CD8-positive, alpha-beta T cell (primary cell): ENCODE measurements at regions of chr3 and their contacts with region 1.

Region 1: GRCh38 chr3:14124615-14125190 is at the starts of genes CHCHD4 and TMEM43:
- DNase-seq: peak; percentile 95 to 100 (median 98)
- ATAC-seq: peak; percentile 87
- H3K4me3 ChIP-seq: peak within 1 kb of the TSS; percentile 95 to 100
- H3K4me3 Mint-ChIP-seq: peak within 1 kb of the TSS; percentile 96
- H3K27ac ChIP-seq: peak within 1 kb of the TSS; percentile 89 to 92
- H3K27ac Mint-ChIP-seq: peak within 1 kb of the TSS; percentile 93
- H3K4me1 ChIP-seq: peaks cover 30% of the 10 kb centered on the region
- H3K4me1 Mint-ChIP-seq: peaks cover 56% of the 10 kb centered on the region
- H3K27me3 ChIP-seq: no peaks in the 10 kb centered on the region
- H3K27me3 Mint-ChIP-seq: no peaks in the 10 kb centered on the region
- CTCF ChIP-seq: no peak
- total RNA-seq, gene CHCHD4: 0.71 to 1.7 TPM
- total RNA-seq, gene TMEM43: 20.1 to 24.3 TPM

Region 2: GRCh38 chr3:12830785-12831156 is 1293.9 kb before region 1 on chr3:
- CTCF ChIA-PET with region 1: no interaction called
- POLR2A ChIA-PET with region 1: no interaction called
- intact Hi-C with region 1: loop called in 1 of 2 experiments (anchors 10 kb)
- DNase-seq: no peak
- ATAC-seq: no peak
- H3K4me3 ChIP-seq: no peak overlapping the region
- H3K4me3 Mint-ChIP-seq: no peak overlapping the region
- H3K27ac ChIP-seq: no peak overlapping the region
- H3K27ac Mint-ChIP-seq: peak overlapping the region; percentile 72
- H3K4me1 ChIP-seq: no peaks in the 10 kb centered on the region
- H3K4me1 Mint-ChIP-seq: no peaks in the 10 kb centered on the region
- H3K27me3 ChIP-seq: no peaks in the 10 kb centered on the region
- H3K27me3 Mint-ChIP-seq: no peaks in the 10 kb centered on the region
- CTCF ChIP-seq: no peak

Region 3: GRCh38 chr3:13866041-13866965 is 258.4 kb before region 1 on chr3:
- CTCF ChIA-PET with region 1: no interaction called
- POLR2A ChIA-PET with region 1: no interaction called
- intact Hi-C with region 1: no loop called
- DNase-seq: peak; percentile 24 to 82 (median 57)
- ATAC-seq: peak; percentile 85
- H3K4me3 ChIP-seq: peak overlapping the region; percentile 7 to 11
- H3K4me3 Mint-ChIP-seq: peak overlapping the region; percentile 68
- H3K27ac ChIP-seq: peak overlapping the region; percentile 66 to 74
- H3K27ac Mint-ChIP-seq: peak overlapping the region; percentile 93
- H3K4me1 ChIP-seq: peaks cover 46% of the 10 kb centered on the region
- H3K4me1 Mint-ChIP-seq: peaks cover 60% of the 10 kb centered on the region
- H3K27me3 ChIP-seq: no peaks in the 10 kb centered on the region
- H3K27me3 Mint-ChIP-seq: no peaks in the 10 kb centered on the region
- CTCF ChIP-seq: no peak

Region 4: GRCh38 chr3:14144423-14145075 is 19.8 kb after region 1 on chr3:
- CTCF ChIA-PET with region 1: no interaction called
- POLR2A ChIA-PET with region 1: interaction called, 42 read pairs
- intact Hi-C with region 1: loop called (anchors 1 kb)
- DNase-seq: peak; percentile 52 to 98 (median 71)
- ATAC-seq: peak; percentile 69
- H3K4me3 ChIP-seq: peak overlapping the region; percentile 15 to 20
- H3K4me3 Mint-ChIP-seq: peak overlapping the region; percentile 66
- H3K27ac ChIP-seq: peak overlapping the region; percentile 95 to 96
- H3K27ac Mint-ChIP-seq: peak overlapping the region; percentile 98
- H3K4me1 ChIP-seq: peaks cover 55% of the 10 kb centered on the region
- H3K4me1 Mint-ChIP-seq: peaks cover 48% of the 10 kb centered on the region
- H3K27me3 ChIP-seq: no peaks in the 10 kb centered on the region
- H3K27me3 Mint-ChIP-seq: no peaks in the 10 kb centered on the region
- CTCF ChIP-seq: no peak

Region 5: GRCh38 chr3:14329116-14329830 is 204.6 kb after region 1 on chr3:
- CTCF ChIA-PET with region 1: no interaction called
- POLR2A ChIA-PET with region 1: no interaction called
- intact Hi-C with region 1: no loop called
- DNase-seq: no peak
- ATAC-seq: no peak
- H3K4me3 ChIP-seq: no peak overlapping the region
- H3K4me3 Mint-ChIP-seq: no peak overlapping the region
- H3K27ac ChIP-seq: no peak overlapping the region
- H3K27ac Mint-ChIP-seq: no peak overlapping the region
- H3K4me1 ChIP-seq: no peaks in the 10 kb centered on the region
- H3K4me1 Mint-ChIP-seq: no peaks in the 10 kb centered on the region
- H3K27me3 ChIP-seq: peaks cover 0 to 3% of the 10 kb centered on the region in 2 experiments
- H3K27me3 Mint-ChIP-seq: peaks cover 6% of the 10 kb centered on the region
- CTCF ChIP-seq: no peak

Region 6: DNA sequence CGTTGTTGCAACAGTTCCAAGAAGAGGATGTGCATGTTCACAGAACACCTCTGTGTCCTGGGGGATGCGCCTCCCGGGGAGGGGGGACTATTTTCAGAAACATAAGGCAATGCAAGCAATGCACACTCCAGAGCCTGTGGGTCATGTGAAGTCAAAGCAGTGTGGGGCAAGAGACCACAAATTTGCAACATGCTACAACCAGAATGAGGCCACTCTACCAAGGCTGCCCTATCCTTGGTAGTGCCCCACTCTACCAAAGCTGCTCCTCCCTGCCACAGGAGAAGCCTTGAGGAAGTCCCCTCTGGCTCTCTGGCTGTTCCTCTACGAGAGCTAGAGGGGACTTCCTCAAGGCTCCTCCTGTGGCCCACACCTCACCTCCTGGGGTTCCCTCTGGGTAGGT is 814.3 kb after region 1 on chr3:
- CTCF ChIA-PET with region 1: no interaction called
- POLR2A ChIA-PET with region 1: no interaction called
- intact Hi-C with region 1: no loop called
- DNase-seq: no peak
- ATAC-seq: no peak
- H3K4me3 ChIP-seq: no peak overlapping the region
- H3K4me3 Mint-ChIP-seq: no peak overlapping the region
- H3K27ac ChIP-seq: no peak overlapping the region
- H3K27ac Mint-ChIP-seq: peak overlapping the region; percentile 29
- H3K4me1 ChIP-seq: no peaks in the 10 kb centered on the region
- H3K4me1 Mint-ChIP-seq: peaks cover 10% of the 10 kb centered on the region
- H3K27me3 ChIP-seq: no peaks in the 10 kb centered on the region
- H3K27me3 Mint-ChIP-seq: no peaks in the 10 kb centered on the region
- CTCF ChIP-seq: no peak

Region 7: DNA sequence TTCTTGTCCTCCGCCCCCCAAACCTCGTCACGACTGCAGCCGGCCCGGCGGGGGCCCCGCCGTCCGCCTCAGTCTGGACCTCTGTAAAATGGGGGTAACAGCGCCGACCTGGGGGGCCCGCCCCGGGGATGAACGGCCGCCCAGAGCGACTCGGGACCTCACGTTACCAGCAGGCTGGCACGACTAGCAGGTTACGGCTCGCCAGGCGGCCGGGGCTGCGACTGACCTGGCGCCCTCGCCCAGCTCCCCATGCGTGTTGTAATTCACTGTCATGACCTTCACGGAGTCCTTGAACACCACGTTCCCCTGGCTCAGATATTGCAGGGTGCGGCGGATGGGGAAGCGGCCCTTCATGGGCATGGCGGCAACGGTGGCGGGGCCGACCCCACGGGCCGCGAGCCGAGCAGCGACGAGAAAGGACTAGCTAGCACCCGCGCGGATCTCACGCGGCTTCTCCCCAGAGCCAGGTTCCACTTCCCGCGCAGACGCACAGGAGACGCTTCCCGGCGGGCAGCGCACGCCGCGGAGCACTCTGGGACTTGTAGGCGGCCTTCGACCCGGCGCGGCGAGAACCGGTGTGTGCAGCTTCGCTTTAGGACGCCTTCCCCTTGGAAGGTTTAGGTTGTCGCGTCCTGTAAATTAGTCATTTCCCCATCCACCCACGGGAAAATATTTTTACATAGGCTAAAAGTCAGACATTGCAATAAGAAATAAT is 940.3 kb after region 1 on chr3 and contains the start of gene MRPS25:
- CTCF ChIA-PET with region 1: no interaction called
- POLR2A ChIA-PET with region 1: no interaction called
- intact Hi-C with region 1: loop called (anchors 1 to 10 kb)
- DNase-seq: peak; percentile 75 to 94 (median 89)
- ATAC-seq: peak; percentile 98
- H3K4me3 ChIP-seq: peak within 1 kb of the TSS; percentile 89 to 96
- H3K4me3 Mint-ChIP-seq: peak within 1 kb of the TSS; percentile 98
- H3K27ac ChIP-seq: peak within 1 kb of the TSS; percentile 78 to 85
- H3K27ac Mint-ChIP-seq: peak within 1 kb of the TSS; percentile 97
- H3K4me1 ChIP-seq: peaks cover 17% of the 10 kb centered on the region
- H3K4me1 Mint-ChIP-seq: peaks cover 26% of the 10 kb centered on the region
- H3K27me3 ChIP-seq: no peaks in the 10 kb centered on the region
- H3K27me3 Mint-ChIP-seq: no peaks in the 10 kb centered on the region
- CTCF ChIP-seq: no peak
- total RNA-seq, gene MRPS25: 51.3 to 56.2 TPM